MCF 10A (cell line): ENCODE measurements at regions of chr2 and their contacts with region 1.

Region 1: GRCh38 chr2:71923887-71924533 is 223.7 kb downstream of the CYP26B1 start:
- DNase-seq: peak; percentile 87
- H3K4me3 Mint-ChIP-seq: no peak overlapping the region
- H3K27ac Mint-ChIP-seq: no peak overlapping the region
- H3K4me1 Mint-ChIP-seq: no peaks in the 10 kb centered on the region
- H3K27me3 Mint-ChIP-seq: no peaks in the 10 kb centered on the region
- CTCF ChIP-seq: peak; percentile 80

Region 2: GRCh38 chr2:71798266-71799012 is 125.6 kb before region 1 on chr2:
- CTCF ChIA-PET with region 1: interaction called, 10 read pairs
- POLR2A ChIA-PET with region 1: no interaction called
- intact Hi-C with region 1: loop called (anchors 1 kb)
- DNase-seq: peak; percentile 61
- H3K4me3 Mint-ChIP-seq: no peak overlapping the region
- H3K27ac Mint-ChIP-seq: no peak overlapping the region
- H3K4me1 Mint-ChIP-seq: no peaks in the 10 kb centered on the region
- H3K27me3 Mint-ChIP-seq: no peaks in the 10 kb centered on the region
- CTCF ChIP-seq: peak; percentile 72

Region 3: GRCh38 chr2:71906357-71906973 is 17.5 kb before region 1 on chr2:
- CTCF ChIA-PET with region 1: interaction called, 42 read pairs
- POLR2A ChIA-PET with region 1: interaction called, 4 read pairs
- intact Hi-C with region 1: no loop called
- DNase-seq: no peak
- H3K4me3 Mint-ChIP-seq: no peak overlapping the region
- H3K27ac Mint-ChIP-seq: no peak overlapping the region
- H3K4me1 Mint-ChIP-seq: no peaks in the 10 kb centered on the region
- H3K27me3 Mint-ChIP-seq: peaks cover 45% of the 10 kb centered on the region
- CTCF ChIP-seq: no peak

Region 4: GRCh38 chr2:72041638-72042111 is 117.7 kb after region 1 on chr2:
- CTCF ChIA-PET with region 1: interaction called, 10 read pairs
- POLR2A ChIA-PET with region 1: no interaction called
- intact Hi-C with region 1: no loop called
- DNase-seq: peak; percentile 91
- H3K4me3 Mint-ChIP-seq: peak overlapping the region; percentile 2
- H3K27ac Mint-ChIP-seq: peak overlapping the region; percentile 21
- H3K4me1 Mint-ChIP-seq: peaks cover 21% of the 10 kb centered on the region
- H3K27me3 Mint-ChIP-seq: no peaks in the 10 kb centered on the region
- CTCF ChIP-seq: no peak

Region 5: GRCh38 chr2:72157871-72158771 is 234.1 kb after region 1 on chr2:
- CTCF ChIA-PET with region 1: interaction called, 204 read pairs
- POLR2A ChIA-PET with region 1: no interaction called
- intact Hi-C with region 1: no loop called
- DNase-seq: no peak
- H3K4me3 Mint-ChIP-seq: no peak overlapping the region
- H3K27ac Mint-ChIP-seq: no peak overlapping the region
- H3K4me1 Mint-ChIP-seq: no peaks in the 10 kb centered on the region
- H3K27me3 Mint-ChIP-seq: peaks cover 15% of the 10 kb centered on the region
- CTCF ChIP-seq: no peak

Region 6: DNA sequence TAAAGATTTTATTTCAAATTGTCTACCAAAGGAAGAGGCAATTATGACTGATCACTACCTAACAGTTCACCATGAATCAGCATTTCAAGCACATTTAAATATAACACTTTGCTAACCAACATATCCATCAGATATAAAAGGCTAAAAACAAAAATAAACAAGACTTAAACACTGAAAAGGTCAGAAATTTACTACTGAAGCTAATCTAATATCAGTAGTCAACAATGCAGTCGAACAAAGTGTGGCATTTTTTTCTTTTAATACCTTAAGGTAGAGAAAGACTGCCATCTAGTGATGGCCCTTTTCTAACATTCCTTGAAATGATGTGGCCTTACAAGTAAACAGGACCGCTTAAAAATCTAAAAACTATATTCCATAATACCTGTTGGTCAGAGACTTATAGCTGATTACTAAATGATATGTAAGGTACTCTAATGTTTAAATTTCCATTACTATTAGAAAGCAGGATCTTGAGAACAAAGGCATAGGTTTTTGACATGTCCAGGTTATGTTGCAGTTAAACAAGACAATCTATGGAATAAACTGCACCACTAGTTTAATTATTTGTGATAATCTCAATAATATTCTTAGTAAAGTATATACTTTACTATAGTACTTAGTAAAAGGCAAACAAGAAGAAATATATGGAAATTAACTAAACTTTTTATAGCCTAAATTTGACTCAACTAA is 821.8 kb after region 1 on chr2:
- CTCF ChIA-PET with region 1: interaction called, 4 read pairs
- POLR2A ChIA-PET with region 1: no interaction called
- intact Hi-C with region 1: loop called (anchors 1 kb)
- DNase-seq: peak; percentile 72
- H3K4me3 Mint-ChIP-seq: no peak overlapping the region
- H3K27ac Mint-ChIP-seq: no peak overlapping the region
- H3K4me1 Mint-ChIP-seq: no peaks in the 10 kb centered on the region
- H3K27me3 Mint-ChIP-seq: no peaks in the 10 kb centered on the region
- CTCF ChIP-seq: peak; percentile 68